PC-9 (cell line): ENCODE measurements at regions of chr9 and their contacts with region 1.

Region 1: GRCh38 chr9:114653556-114654159 is 3.9 kb downstream of the TEX53 start:
- DNase-seq: peak; percentile 60 to 79
- H3K4me3 ChIP-seq: no peak overlapping the region
- H3K27ac ChIP-seq: no peak overlapping the region
- H3K4me1 ChIP-seq: no peaks in the 10 kb centered on the region
- H3K27me3 ChIP-seq: no peaks in the 10 kb centered on the region
- CTCF ChIP-seq: peak; percentile 93

Region 2: DNA sequence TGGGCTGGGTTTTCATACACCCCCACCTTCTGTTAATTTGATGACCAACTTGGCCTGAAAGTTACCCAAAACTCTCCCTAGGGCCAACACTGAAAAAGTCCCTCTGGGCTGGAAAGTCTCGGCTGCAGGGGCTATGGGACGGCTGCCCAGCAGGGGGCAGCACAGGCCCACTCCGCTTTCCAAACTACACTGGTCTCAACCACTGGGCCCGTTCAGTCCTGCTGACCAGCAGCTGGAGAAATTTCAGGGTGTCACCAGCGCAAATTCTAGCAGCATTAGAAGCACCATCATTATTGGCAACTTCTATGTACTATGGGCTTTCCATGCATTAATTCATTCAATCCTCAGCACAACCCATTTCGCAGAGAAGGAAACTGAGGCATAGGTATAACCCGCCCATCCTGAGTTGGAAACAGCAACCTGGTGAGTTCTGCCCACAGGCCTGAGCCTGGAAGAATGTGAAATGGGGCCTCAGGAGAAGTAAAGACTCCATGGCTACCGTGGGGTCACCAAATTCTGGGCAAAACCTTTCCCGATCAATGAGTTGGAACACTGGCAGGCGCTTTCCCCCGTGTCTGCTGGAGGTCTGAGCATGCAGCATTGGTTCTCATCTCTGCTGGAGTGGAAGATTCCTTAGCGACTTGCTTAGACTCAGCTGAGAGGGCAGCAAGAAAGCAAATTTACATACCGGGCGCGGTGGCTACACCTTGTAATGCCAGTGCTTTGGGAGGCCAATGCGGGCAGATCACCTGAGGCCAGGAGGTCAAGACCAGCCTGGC is 314.3 kb before region 1 on chr9:
- CTCF ChIA-PET with region 1: interaction called, 3 read pairs
- POLR2A ChIA-PET with region 1: no interaction called
- intact Hi-C with region 1: loop called (anchors 1 kb)
- DNase-seq: peak in 1 of 2 experiments; percentile 57
- H3K4me3 ChIP-seq: no peak overlapping the region
- H3K27ac ChIP-seq: no peak overlapping the region
- H3K4me1 ChIP-seq: no peaks in the 10 kb centered on the region
- H3K27me3 ChIP-seq: no peaks in the 10 kb centered on the region
- CTCF ChIP-seq: peak; percentile 90

Region 3: DNA sequence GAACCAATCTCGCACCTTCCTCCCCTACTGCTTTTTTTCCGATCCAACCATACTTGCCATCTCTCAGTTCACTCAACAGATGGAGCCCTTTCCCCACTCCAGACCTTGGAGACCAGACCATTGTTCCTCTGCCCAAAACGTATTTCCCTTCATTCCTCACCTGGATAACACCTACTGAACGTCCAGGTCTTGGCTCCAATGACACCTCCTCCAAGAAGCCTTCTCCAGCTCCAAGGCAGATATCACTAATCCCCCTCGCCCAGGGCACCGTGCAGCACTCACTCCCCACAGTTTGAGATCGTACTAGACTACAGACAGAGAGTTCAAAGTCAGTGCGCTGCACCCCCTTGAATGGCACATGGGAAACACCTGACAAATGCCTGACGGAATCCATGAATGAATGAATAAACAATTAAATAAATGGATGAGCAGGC is 218.8 kb before region 1 on chr9:
- CTCF ChIA-PET with region 1: interaction called, 22 read pairs
- POLR2A ChIA-PET with region 1: no interaction called
- intact Hi-C with region 1: loop called (anchors 1 kb)
- DNase-seq: peak; percentile 40 to 43
- H3K4me3 ChIP-seq: no peak overlapping the region
- H3K27ac ChIP-seq: no peak overlapping the region
- H3K4me1 ChIP-seq: no peaks in the 10 kb centered on the region
- H3K27me3 ChIP-seq: no peaks in the 10 kb centered on the region
- CTCF ChIP-seq: peak; percentile 80

Region 4: GRCh38 chr9:114525505-114525904 is 128.2 kb before region 1 on chr9:
- CTCF ChIA-PET with region 1: interaction called, 10 read pairs
- POLR2A ChIA-PET with region 1: no interaction called
- intact Hi-C with region 1: no loop called
- DNase-seq: peak in 1 of 2 experiments; percentile 73
- H3K4me3 ChIP-seq: no peak overlapping the region
- H3K27ac ChIP-seq: no peak overlapping the region
- H3K4me1 ChIP-seq: no peaks in the 10 kb centered on the region; the same call in 1 of the 2 replicates
- H3K27me3 ChIP-seq: no peaks in the 10 kb centered on the region
- CTCF ChIP-seq: no peak